ENCODE measurements at regions of chr7 and their contacts with region 1.

Region 1: DNA sequence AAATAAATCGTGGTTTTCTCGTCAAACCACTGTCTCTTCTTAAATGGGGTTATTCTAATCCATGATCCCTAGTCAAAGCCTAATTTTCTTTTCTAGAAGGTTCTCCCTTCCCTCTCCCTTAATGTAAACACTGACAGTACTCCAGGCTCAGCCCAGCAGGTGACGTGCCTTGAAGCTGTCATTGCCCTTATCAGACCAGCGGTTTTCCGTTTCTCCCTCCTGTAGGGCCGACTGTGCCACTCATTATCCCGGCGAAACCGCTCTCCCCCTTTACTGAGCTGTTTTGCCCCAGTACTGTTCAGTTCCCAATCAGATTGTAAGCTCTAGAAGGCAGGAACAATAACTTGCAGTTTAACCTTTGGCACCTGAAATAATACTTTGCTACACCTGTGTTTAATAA is 153.5 kb upstream of the RHEB start:
- DNase-seq: no peak
- ATAC-seq: no peak
- H3K4me3 ChIP-seq: no peak overlapping the region
- H3K27ac ChIP-seq: no peak overlapping the region
- H3K4me1 ChIP-seq: peaks cover 10% of the 10 kb centered on the region
- H3K27me3 ChIP-seq: no peaks in the 10 kb centered on the region
- CTCF ChIP-seq: no peak

Region 2: GRCh38 chr7:151689196-151689971 is 16.2 kb after region 1 on chr7:
- CTCF ChIA-PET with region 1: no interaction called
- POLR2A ChIA-PET with region 1: interaction called, 10 read pairs
- in situ Hi-C with region 1: no loop called
- intact Hi-C with region 1: no loop called
- DNase-seq: no peak
- ATAC-seq: peak; percentile 34
- H3K4me3 ChIP-seq: peak overlapping the region in 1 of 2 experiments; percentile 26; a peak in 2 of 4 replicates
- H3K27ac ChIP-seq: peak overlapping the region; percentile 99
- H3K4me1 ChIP-seq: peaks cover 65% of the 10 kb centered on the region
- H3K27me3 ChIP-seq: no peaks in the 10 kb centered on the region
- CTCF ChIP-seq: no peak